Kidney (tissue), 22 donors: ENCODE measurements at regions of chr5 and their contacts with region 1.

Region 1: GRCh38 chr5:151051066-151051930 is 29.5 kb downstream of the TNIP1 start:
- DNase-seq: peak; percentile 75 to 88 (median 83)
- H3K4me3 ChIP-seq: no peak overlapping the region
- H3K27ac ChIP-seq: peak overlapping the region in 1 of 2 donors; percentile 8
- H3K4me1 ChIP-seq: peaks cover 0 to 14% (median 13%) of the 10 kb centered on the region in 3 donors
- H3K27me3 ChIP-seq: no peaks in the 10 kb centered on the region
- CTCF ChIP-seq: peak; percentile 95

Region 2: DNA sequence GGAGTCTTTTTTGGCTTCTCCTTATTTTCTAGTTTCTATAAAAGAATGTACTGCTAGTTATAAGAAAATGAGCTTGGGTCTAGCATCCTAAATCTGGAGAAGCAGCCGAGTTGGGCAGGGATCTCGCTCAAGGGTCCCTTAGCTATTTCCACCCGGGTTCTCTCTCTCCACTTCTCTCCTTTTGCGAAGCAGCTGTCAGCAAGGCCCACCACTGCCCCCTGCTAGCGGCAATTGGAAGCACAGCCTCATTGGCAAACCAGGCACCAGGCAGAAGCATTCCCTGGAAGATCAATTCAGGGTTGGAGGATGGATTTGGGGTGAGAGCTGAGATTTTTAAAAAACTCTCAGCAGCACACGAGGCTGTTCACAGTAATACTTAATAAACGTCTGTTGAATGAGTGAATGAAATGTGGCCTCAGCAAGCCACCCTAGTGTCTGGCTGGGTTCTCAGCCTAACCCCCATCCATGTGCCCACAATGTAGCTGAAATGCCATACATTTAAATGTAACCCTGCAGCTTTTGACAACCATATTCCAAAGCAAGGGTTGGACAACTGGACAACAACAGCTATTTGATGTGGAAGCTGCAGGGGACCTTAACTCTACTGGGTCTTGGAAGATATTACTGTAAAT is 64.1 kb after region 1 on chr5:
- intact Hi-C with region 1: loop called (anchors 5 kb)
- DNase-seq: peak; percentile 66 to 88 (median 73)
- H3K4me3 ChIP-seq: no peak overlapping the region
- H3K27ac ChIP-seq: no peak overlapping the region
- H3K4me1 ChIP-seq: no peaks in the 10 kb centered on the region
- H3K27me3 ChIP-seq: no peaks in the 10 kb centered on the region
- CTCF ChIP-seq: peak; percentile 98

Region 3: GRCh38 chr5:151541571-151541970 is 490.3 kb after region 1 on chr5:
- intact Hi-C with region 1: no loop called
- DNase-seq: no peak
- H3K4me3 ChIP-seq: no peak overlapping the region
- H3K27ac ChIP-seq: no peak overlapping the region
- H3K4me1 ChIP-seq: no peaks in the 10 kb centered on the region
- H3K27me3 ChIP-seq: no peaks in the 10 kb centered on the region
- CTCF ChIP-seq: no peak